Activated T-helper 2 cell treated with anti-CD3 and anti-CD28 coated beads, Interferon-gamma antibody, Interleukin-2, Interleukin-4, amounts not matched to agents 10 μg/mL and 5 μg/mL and 100 μg/mL, durations not matched to agents 14 hours and 24 hours and 36 hours (primary cell): ENCODE measurements at regions of chr1 and their contacts with region 1.

Region 1: GRCh38 chr1:226626577-226626956 is 78.0 kb downstream of the STUM start:
- DNase-seq: peak; percentile 76
- H3K4me3 Mint-ChIP-seq: peak overlapping the region; percentile 9
- H3K27ac Mint-ChIP-seq: peak overlapping the region; percentile 78
- H3K4me1 Mint-ChIP-seq: peaks cover 29% of the 10 kb centered on the region
- H3K27me3 Mint-ChIP-seq: peaks cover 10% of the 10 kb centered on the region

Region 2: GRCh38 chr1:226662642-226663326 is 36.2 kb after region 1 on chr1:
- intact Hi-C with region 1: loop called (anchors 2 kb)
- DNase-seq: peak; percentile 80
- H3K4me3 Mint-ChIP-seq: peak overlapping the region; percentile 5
- H3K27ac Mint-ChIP-seq: peak overlapping the region; percentile 81
- H3K4me1 Mint-ChIP-seq: peaks cover 74% of the 10 kb centered on the region
- H3K27me3 Mint-ChIP-seq: no peaks in the 10 kb centered on the region

Region 3: GRCh38 chr1:226679853-226680516 is 53.4 kb after region 1 on chr1:
- intact Hi-C with region 1: loop called (anchors 2 kb)
- DNase-seq: peak; percentile 68
- H3K4me3 Mint-ChIP-seq: peak overlapping the region; percentile 79
- H3K27ac Mint-ChIP-seq: peak overlapping the region; percentile 95
- H3K4me1 Mint-ChIP-seq: peaks cover 88% of the 10 kb centered on the region
- H3K27me3 Mint-ChIP-seq: no peaks in the 10 kb centered on the region

Region 4: DNA sequence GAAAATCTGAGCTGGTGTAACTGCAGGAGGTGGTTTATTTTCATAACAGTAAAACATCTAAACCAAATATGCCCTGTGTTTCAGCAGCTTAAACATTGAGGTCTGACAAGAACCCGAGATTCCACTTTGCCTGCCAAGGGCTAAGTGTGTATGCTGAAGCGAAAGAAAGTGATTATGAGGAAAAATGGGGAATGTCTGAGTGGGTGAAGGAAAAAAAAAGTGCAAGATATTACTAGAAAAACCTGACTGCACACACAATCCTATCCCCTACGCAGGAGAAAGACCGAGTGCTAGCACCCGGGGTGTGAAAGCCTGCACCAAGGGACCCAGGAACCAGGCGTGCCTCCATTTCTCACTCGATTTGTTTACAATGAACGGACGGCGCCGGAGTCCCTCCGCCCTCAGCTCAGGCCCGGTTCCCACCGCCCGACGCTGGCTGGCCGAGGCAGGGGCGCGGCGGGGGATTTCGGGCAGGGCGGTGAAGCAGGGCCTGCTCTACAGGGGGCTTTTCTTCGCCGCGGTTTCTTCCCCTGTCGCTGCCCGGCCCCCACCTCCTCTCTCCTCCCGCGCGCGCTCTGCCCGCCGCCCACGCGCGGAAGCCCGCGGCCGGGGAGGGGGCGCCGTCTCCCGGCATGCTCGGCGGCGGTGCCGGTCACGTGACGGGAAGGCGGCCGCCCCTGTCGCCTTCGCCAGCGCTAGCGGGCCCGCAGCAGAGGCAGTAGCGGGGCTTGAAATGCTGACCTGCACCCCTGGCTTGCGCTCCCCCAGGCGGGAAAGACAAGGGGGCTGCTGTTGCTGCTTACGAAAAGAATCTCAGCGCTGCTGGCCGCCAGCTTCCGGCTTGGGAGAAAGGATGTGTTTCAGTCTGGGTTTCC is 76.6 kb after region 1 on chr1:
- intact Hi-C with region 1: loop called (anchors 2 kb)
- DNase-seq: peak; percentile 76
- H3K4me3 Mint-ChIP-seq: peak overlapping the region; percentile 75
- H3K27ac Mint-ChIP-seq: peak overlapping the region; percentile 84
- H3K4me1 Mint-ChIP-seq: peaks cover 59% of the 10 kb centered on the region
- H3K27me3 Mint-ChIP-seq: no peaks in the 10 kb centered on the region

Region 5: GRCh38 chr1:226827968-226828513 is 201.5 kb after region 1 on chr1:
- intact Hi-C with region 1: loop called (anchors 1 kb)
- DNase-seq: peak; percentile 90
- H3K4me3 Mint-ChIP-seq: peak overlapping the region; percentile 39
- H3K27ac Mint-ChIP-seq: peak overlapping the region; percentile 90
- H3K4me1 Mint-ChIP-seq: peaks cover 21% of the 10 kb centered on the region
- H3K27me3 Mint-ChIP-seq: peaks cover 3% of the 10 kb centered on the region

Region 6: DNA sequence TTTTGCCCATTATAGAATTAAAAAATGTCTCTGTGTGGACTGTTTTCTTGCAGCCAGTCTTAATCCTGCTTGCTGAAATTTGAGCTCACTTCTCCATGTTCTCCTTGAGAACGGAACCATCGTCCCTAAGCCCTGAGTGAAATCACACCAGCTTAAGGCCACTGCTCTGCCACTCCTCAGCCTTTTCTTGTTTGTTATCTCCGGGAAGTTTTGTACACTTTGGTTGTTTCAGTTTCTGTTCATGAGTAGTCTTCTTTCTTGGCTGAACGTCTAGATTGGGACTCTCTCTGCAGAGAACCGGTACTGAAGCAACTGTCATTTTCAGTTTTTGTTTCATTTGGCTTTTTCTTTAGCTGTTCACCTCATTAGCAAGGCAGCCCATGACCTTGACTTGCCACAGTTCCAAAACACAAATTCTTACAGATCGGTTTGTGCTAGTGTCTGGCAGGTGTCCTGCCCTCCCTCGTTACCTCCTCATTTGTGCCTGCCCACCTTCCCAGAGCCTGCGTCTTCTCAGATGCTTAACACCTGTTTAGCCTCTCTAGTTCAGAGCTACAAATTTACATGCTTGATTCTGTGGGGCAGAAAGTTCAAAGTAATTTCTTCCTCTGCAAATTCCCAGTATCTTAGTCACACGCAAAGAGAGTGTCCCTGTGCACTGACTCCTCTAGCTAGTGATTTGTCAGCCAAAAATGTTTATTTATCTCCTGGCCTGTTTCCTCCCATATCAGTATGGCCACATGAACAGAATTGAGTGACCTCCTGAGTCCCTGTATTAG is 256.3 kb after region 1 on chr1:
- intact Hi-C with region 1: loop called (anchors 5 kb)
- DNase-seq: peak; percentile 39
- H3K4me3 Mint-ChIP-seq: peak overlapping the region; percentile 74
- H3K27ac Mint-ChIP-seq: peak overlapping the region; percentile 96
- H3K4me1 Mint-ChIP-seq: peaks cover 57% of the 10 kb centered on the region
- H3K27me3 Mint-ChIP-seq: no peaks in the 10 kb centered on the region

Region 7: GRCh38 chr1:226940029-226940805 is 313.6 kb after region 1 on chr1 and contains the start of gene COQ8A:
- intact Hi-C with region 1: loop called (anchors 5 kb)
- DNase-seq: peak; percentile 99
- H3K4me3 Mint-ChIP-seq: peak within 1 kb of the TSS; percentile 87
- H3K27ac Mint-ChIP-seq: peak within 1 kb of the TSS; percentile 96
- H3K4me1 Mint-ChIP-seq: peaks cover 32% of the 10 kb centered on the region
- H3K27me3 Mint-ChIP-seq: no peaks in the 10 kb centered on the region
- total RNA-seq, gene COQ8A: 28.0 and 30.4 TPM in 2 replicates